CD14-positive monocyte (primary cell): ENCODE measurements at regions of chr1 and their contacts with region 1.

Region 1: GRCh38 chr1:159071970-159072582 is 4.5 kb downstream of the AIM2 start:
- DNase-seq: peak in 2 of 3 donors; percentile 63 to 72
- H3K4me3 ChIP-seq: no peak overlapping the region
- H3K4me3 Mint-ChIP-seq: no peak overlapping the region
- H3K27ac ChIP-seq: no peak overlapping the region
- H3K27ac Mint-ChIP-seq: peak overlapping the region in 2 of 7 donors; percentile 32 to 65
- H3K4me1 ChIP-seq: peaks cover 59 to 78% of the 10 kb centered on the region in 2 donors
- H3K4me1 Mint-ChIP-seq: peaks cover 74% of the 10 kb centered on the region
- H3K27me3 ChIP-seq: no peaks in the 10 kb centered on the region
- H3K27me3 Mint-ChIP-seq: no peaks in the 10 kb centered on the region
- CTCF ChIP-seq: peak; percentile 90

Region 2: GRCh38 chr1:158285756-158286241 is 786.3 kb before region 1 on chr1:
- intact Hi-C with region 1: loop called in 1 of 2 experiments (anchors 10 kb)
- DNase-seq: peak; percentile 98 to 100 (median 98)
- H3K4me3 ChIP-seq: peak overlapping the region in 1 of 3 experiments; percentile 52
- H3K4me3 Mint-ChIP-seq: peak overlapping the region; percentile 55 to 63
- H3K27ac ChIP-seq: peak overlapping the region; percentile 92 to 94
- H3K27ac Mint-ChIP-seq: peak overlapping the region; percentile 96 to 100 (median 98)
- H3K4me1 ChIP-seq: peaks cover 80 to 92% of the 10 kb centered on the region in 2 donors
- H3K4me1 Mint-ChIP-seq: peaks cover 62% of the 10 kb centered on the region
- H3K27me3 ChIP-seq: no peaks in the 10 kb centered on the region
- H3K27me3 Mint-ChIP-seq: peaks cover 0 to 1% (median 0%) of the 10 kb centered on the region in 3 donors
- CTCF ChIP-seq: no peak

Region 3: DNA sequence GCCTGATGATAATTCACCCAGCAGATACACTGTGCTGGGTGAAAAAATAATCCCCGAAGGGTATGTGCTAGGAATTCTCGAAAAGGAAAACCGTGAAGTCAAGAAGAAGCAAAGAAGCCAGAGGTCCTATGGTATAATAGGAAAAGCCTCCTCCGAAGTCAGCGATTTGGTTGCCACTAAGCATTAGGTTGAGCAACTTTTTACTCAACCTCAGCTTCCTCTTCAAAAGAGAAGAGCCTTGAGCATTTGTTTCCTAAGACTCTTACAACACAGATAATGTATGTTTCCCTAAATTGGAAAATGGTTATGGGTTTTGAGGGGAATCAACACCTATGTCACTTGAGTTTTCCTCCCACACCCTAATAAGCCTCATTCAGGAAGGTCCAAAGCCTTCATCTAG is 262.2 kb before region 1 on chr1:
- intact Hi-C with region 1: loop called in 1 of 2 experiments (anchors 10 kb)
- DNase-seq: peak; percentile 68 to 97 (median 87)
- H3K4me3 ChIP-seq: peak overlapping the region; percentile 26 to 72 (median 41)
- H3K4me3 Mint-ChIP-seq: peak overlapping the region; percentile 57 to 92
- H3K27ac ChIP-seq: peak overlapping the region; percentile 52 to 85
- H3K27ac Mint-ChIP-seq: peak overlapping the region; percentile 92 to 99 (median 97)
- H3K4me1 ChIP-seq: peaks cover 97 to 99% of the 10 kb centered on the region in 2 donors
- H3K4me1 Mint-ChIP-seq: peaks cover 77% of the 10 kb centered on the region
- H3K27me3 ChIP-seq: no peaks in the 10 kb centered on the region
- H3K27me3 Mint-ChIP-seq: no peaks in the 10 kb centered on the region
- CTCF ChIP-seq: no peak

Region 4: GRCh38 chr1:158819461-158820443 is 252.3 kb before region 1 on chr1:
- intact Hi-C with region 1: loop called in 1 of 2 experiments (anchors 10 kb)
- DNase-seq: peak; percentile 25 to 59 (median 44)
- H3K4me3 ChIP-seq: peak overlapping the region in 1 of 3 experiments; percentile 41
- H3K4me3 Mint-ChIP-seq: peak overlapping the region in 1 of 2 donors; percentile 82
- H3K27ac ChIP-seq: peak overlapping the region; percentile 50 to 83
- H3K27ac Mint-ChIP-seq: peak overlapping the region; percentile 84 to 95 (median 92)
- H3K4me1 ChIP-seq: peaks cover 48 to 52% of the 10 kb centered on the region in 2 donors
- H3K4me1 Mint-ChIP-seq: peaks cover 67% of the 10 kb centered on the region
- H3K27me3 ChIP-seq: no peaks in the 10 kb centered on the region
- H3K27me3 Mint-ChIP-seq: no peaks in the 10 kb centered on the region
- CTCF ChIP-seq: no peak

Region 5: DNA sequence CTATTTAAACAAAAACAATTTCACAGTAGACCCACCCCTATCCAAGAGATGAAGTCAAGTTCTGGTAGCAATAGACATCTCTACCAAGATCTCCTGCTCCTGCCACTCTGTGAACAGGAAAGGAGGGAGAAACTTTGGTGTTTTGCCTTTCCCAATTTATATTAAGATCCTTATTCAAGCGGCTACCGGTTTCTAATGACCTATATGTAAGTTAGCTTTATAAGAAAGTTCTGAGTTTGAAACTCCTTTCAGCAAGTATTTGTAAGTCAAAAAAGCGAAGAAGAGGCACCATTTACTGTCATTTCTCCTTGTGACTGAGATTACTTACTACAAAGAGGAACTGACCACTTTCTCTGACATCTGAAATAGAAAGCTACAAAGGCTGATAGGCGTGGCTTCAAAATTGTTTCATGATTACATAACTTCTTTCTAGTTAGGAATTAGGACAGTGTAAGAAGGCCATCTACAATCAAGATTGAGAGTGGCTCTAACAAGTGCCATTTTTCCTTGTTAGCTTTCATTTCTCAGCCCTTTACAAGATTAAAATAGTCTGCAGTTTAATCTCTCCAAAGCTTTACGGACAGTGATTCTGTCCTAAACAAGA is 241.1 kb before region 1 on chr1 and contains the start of gene MNDA:
- intact Hi-C with region 1: loop called (anchors 10 kb)
- DNase-seq: peak; percentile 84 to 97 (median 84)
- H3K4me3 ChIP-seq: peak within 1 kb of the TSS; percentile 86 to 100 (median 92)
- H3K4me3 Mint-ChIP-seq: peak within 1 kb of the TSS; percentile 83 to 95
- H3K27ac ChIP-seq: peak within 1 kb of the TSS; percentile 27 to 82
- H3K27ac Mint-ChIP-seq: peak within 1 kb of the TSS; percentile 88 to 96 (median 94)
- H3K4me1 ChIP-seq: peaks cover 22 to 28% of the 10 kb centered on the region in 2 donors
- H3K4me1 Mint-ChIP-seq: peaks cover 21% of the 10 kb centered on the region
- H3K27me3 ChIP-seq: no peaks in the 10 kb centered on the region
- H3K27me3 Mint-ChIP-seq: no peaks in the 10 kb centered on the region
- CTCF ChIP-seq: no peak
- polyA plus RNA-seq, gene MNDA: 365 to 1,917 (median 1,418) TPM

Region 6: GRCh38 chr1:159009704-159010361 is 62.2 kb before region 1 on chr1 and contains the start of gene IFI16:
- intact Hi-C with region 1: loop called in 1 of 2 experiments (anchors 5 kb)
- DNase-seq: peak; percentile 84 to 96 (median 93)
- H3K4me3 ChIP-seq: peak within 1 kb of the TSS; percentile 90 to 99 (median 95)
- H3K4me3 Mint-ChIP-seq: peak within 1 kb of the TSS; percentile 87 to 97
- H3K27ac ChIP-seq: peak within 1 kb of the TSS; percentile 73 to 92
- H3K27ac Mint-ChIP-seq: peak within 1 kb of the TSS; percentile 92 to 98 (median 96)
- H3K4me1 ChIP-seq: peaks cover 49 to 71% of the 10 kb centered on the region in 2 donors
- H3K4me1 Mint-ChIP-seq: peaks cover 68% of the 10 kb centered on the region
- H3K27me3 ChIP-seq: no peaks in the 10 kb centered on the region
- H3K27me3 Mint-ChIP-seq: peaks cover 0 to 2% (median 0%) of the 10 kb centered on the region in 3 donors
- CTCF ChIP-seq: no peak
- polyA plus RNA-seq, gene IFI16: 64.8 to 99.7 (median 80.1) TPM

Region 7: GRCh38 chr1:159056069-159056698 is 15.9 kb before region 1 on chr1:
- intact Hi-C with region 1: no loop called
- DNase-seq: no peak
- H3K4me3 ChIP-seq: peak overlapping the region in 1 of 3 experiments; percentile 23
- H3K4me3 Mint-ChIP-seq: peak overlapping the region in 1 of 2 donors; percentile 44
- H3K27ac ChIP-seq: peak overlapping the region; percentile 15 to 69
- H3K27ac Mint-ChIP-seq: peak overlapping the region; percentile 18 to 82 (median 69)
- H3K4me1 ChIP-seq: peaks cover 49 to 60% of the 10 kb centered on the region in 2 donors
- H3K4me1 Mint-ChIP-seq: peaks cover 60% of the 10 kb centered on the region
- H3K27me3 ChIP-seq: no peaks in the 10 kb centered on the region
- H3K27me3 Mint-ChIP-seq: no peaks in the 10 kb centered on the region
- CTCF ChIP-seq: no peak

Region 8: GRCh38 chr1:159229486-159229885 is 157.4 kb after region 1 on chr1:
- intact Hi-C with region 1: no loop called
- DNase-seq: no peak
- H3K4me3 ChIP-seq: no peak overlapping the region
- H3K4me3 Mint-ChIP-seq: no peak overlapping the region
- H3K27ac ChIP-seq: no peak overlapping the region
- H3K27ac Mint-ChIP-seq: peak overlapping the region in 1 of 7 donors; percentile 14
- H3K4me1 ChIP-seq: no peaks in the 10 kb centered on the region
- H3K4me1 Mint-ChIP-seq: no peaks in the 10 kb centered on the region
- H3K27me3 ChIP-seq: no peaks in the 10 kb centered on the region
- H3K27me3 Mint-ChIP-seq: peaks cover 0 to 5% (median 1%) of the 10 kb centered on the region in 3 donors
- CTCF ChIP-seq: no peak